Mammary epithelial cell (primary cell): ENCODE measurements at regions of chr2 and their contacts with region 1.

Region 1: DNA sequence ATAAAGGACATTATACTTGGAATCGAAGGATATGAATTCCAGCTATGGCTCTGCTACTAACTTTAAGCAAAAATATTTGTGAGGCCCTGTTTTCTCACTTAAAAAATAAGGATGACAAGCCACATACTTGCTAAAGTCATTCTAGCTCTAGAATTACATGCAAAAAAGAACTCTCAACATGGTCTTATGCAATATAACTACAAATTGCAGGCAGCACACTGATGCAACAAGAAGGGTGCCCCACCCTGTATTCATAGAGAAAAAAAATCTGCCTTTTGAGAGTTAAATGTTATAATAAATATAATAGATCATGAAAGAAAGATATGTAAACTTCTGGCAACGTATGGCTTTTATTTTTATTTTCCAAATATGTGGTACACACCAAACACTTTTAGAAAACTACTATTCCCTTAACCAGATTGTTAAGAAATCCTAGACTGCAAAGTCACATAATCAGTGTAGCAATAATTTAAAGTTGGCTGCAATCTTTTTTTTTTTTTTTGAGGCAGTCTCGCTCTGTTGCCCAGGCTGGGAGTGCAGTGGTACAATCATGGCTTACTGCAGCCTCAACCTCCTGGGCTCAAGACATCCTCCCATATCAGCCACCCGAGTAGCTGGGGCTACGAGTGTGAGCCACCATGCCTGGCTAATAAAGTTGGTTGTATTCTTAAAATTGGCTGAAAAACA is 40.2 kb upstream of the WDSUB1 start:
- DNase-seq: peak; percentile 15
- H3K4me3 ChIP-seq: no peak overlapping the region
- H3K27ac ChIP-seq: peak overlapping the region; percentile 35
- H3K4me1 ChIP-seq: no peaks in the 10 kb centered on the region
- H3K27me3 ChIP-seq: no peaks in the 10 kb centered on the region
- CTCF ChIP-seq: no peak

Region 2: DNA sequence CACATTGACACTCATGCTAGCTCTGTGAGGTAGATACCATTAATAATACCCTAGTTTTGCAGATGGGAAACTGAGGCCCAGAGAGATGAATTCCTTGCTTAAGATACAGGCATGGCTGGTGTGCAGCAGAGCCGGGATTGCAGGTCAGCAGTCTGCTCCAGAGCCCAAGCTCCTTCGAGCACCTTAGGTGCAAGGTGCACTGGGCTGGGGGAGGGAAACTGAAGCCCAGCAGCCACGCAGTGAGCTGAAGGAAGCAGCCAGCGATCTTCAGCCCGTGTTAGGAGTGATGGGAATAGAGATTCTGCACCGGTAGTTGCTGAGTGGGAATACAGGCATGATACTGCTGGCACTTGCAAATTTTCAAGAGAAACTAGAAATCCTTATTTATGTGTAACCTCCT is 307.7 kb before region 1 on chr2:
- CTCF ChIA-PET with region 1: no interaction called
- dilution Hi-C with region 1: no loop called
- in situ Hi-C with region 1: no loop called
- intact Hi-C with region 1: no loop called
- DNase-seq: no peak
- H3K4me3 ChIP-seq: no peak overlapping the region
- H3K27ac ChIP-seq: no peak overlapping the region
- H3K4me1 ChIP-seq: no peaks in the 10 kb centered on the region
- H3K27me3 ChIP-seq: no peaks in the 10 kb centered on the region
- CTCF ChIP-seq: no peak

Region 3: GRCh38 chr2:159249984-159250715 is 76.6 kb before region 1 on chr2:
- CTCF ChIA-PET with region 1: no interaction called
- dilution Hi-C with region 1: no loop called
- in situ Hi-C with region 1: no loop called
- intact Hi-C with region 1: loop called (anchors 5 kb)
- DNase-seq: peak; percentile 94
- H3K4me3 ChIP-seq: no peak overlapping the region
- H3K27ac ChIP-seq: peak overlapping the region; percentile 63
- H3K4me1 ChIP-seq: peaks cover 15% of the 10 kb centered on the region
- H3K27me3 ChIP-seq: no peaks in the 10 kb centered on the region
- CTCF ChIP-seq: no peak

Region 4: DNA sequence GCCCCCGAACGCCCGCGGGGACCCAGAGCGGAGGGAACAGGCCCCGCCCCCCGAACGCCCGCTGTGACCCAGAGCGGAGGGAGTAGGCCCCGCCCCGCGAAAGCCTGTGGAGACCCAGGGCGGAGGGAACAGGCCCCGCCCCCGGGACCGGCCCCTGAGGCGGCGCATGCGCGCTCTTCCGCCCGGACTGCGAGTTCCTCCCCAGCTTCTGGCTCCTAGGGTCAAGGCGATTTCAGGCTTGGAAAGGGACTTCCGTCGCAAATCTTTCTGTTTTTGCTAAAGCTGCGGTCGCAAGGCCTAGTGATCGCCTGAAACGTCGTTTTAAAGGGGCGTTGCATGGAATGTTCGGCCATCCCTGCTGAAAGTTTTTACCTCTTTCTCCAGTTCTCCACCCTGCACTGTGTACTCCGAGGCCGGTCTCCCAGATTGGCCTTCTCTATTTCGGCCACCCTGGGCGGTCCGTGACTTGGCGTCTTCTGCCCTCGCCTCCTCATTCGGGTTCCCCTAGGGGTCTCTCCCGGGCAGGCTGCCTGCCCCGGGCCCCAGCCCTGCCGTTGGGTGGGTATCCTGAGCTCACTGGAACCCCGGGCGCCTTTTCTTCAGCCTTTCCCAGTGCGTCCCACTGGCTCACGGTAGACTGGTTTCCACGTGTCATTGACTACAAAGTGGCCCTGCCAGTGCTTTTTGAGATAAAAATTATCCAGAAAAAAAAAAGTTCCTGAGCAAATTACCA is 39.8 kb before region 1 on chr2:
- CTCF ChIA-PET with region 1: interaction called, 4 read pairs
- dilution Hi-C with region 1: no loop called
- in situ Hi-C with region 1: no loop called
- intact Hi-C with region 1: loop called (anchors 5 kb)
- DNase-seq: peak; percentile 95
- H3K4me3 ChIP-seq: peak overlapping the region; percentile 34 to 76 (median 72)
- H3K27ac ChIP-seq: peak overlapping the region; percentile 48
- H3K4me1 ChIP-seq: peaks cover 14% of the 10 kb centered on the region
- H3K27me3 ChIP-seq: no peaks in the 10 kb centered on the region
- CTCF ChIP-seq: no peak